BJ (cell line): ENCODE measurements at regions of chr1 and their contacts with region 1.

Region 1: DNA sequence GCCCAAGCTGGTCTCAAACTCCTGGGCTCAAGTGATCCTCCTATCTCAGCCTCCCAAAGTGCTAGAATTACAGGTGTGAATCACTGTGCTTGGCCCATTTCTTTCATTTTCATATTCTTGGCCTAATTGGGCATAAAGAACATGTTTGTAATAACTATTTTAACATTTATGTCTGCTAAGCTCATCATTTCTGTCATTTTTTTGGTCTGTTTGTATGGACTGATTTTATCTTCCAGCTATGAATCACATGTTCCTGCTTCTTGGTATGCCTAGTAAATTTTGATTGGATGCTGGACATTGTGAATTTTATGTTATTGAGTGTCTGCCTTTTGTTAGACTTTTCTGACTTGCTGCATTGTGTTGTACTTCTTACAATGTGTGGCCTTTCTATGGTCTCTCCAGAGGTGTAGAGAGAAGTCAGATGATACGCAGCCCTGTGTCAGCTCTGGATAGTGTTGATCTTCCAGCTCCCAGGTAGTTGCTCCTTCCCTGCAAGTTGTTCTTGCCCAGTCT is 39.0 kb upstream of the PPM1J start:
- DNase-seq: no peak
- H3K4me3 ChIP-seq: no peak overlapping the region
- H3K27me3 ChIP-seq: no peaks in the 10 kb centered on the region; the same call in 1 of the 2 replicates
- CTCF ChIP-seq: no peak

Region 2: GRCh38 chr1:111833334-111833733 is 920.8 kb before region 1 on chr1:
- CTCF ChIA-PET with region 1: no interaction called
- POLR2A ChIA-PET with region 1: no interaction called
- DNase-seq: no peak
- H3K4me3 ChIP-seq: no peak overlapping the region
- H3K27me3 ChIP-seq: no peaks in the 10 kb centered on the region
- CTCF ChIP-seq: no peak

Region 3: DNA sequence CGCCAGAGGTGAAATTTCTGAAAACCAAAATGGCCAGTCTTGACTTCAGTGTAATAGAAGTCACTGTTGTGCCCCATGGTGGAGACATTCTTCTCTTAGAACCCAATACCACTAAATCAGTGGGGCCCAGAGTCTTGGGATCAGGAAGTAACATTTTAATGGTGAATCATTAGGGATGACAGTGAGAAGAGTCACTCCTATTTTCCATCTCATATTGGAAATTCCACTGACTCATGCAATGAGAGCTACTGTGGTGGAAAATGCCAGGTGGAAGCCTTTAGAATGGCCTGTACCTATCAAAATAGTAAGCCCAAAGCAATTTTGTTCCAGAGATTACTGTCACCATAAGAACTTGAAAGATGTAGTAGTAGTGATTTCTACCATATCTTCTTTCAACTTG is 18.4 kb before region 1 on chr1:
- CTCF ChIA-PET with region 1: interaction called, 3 read pairs
- POLR2A ChIA-PET with region 1: interaction called, 12 read pairs
- DNase-seq: peak; percentile 43
- H3K4me3 ChIP-seq: no peak overlapping the region
- H3K27me3 ChIP-seq: no peaks in the 10 kb centered on the region
- CTCF ChIP-seq: no peak

Region 4: DNA sequence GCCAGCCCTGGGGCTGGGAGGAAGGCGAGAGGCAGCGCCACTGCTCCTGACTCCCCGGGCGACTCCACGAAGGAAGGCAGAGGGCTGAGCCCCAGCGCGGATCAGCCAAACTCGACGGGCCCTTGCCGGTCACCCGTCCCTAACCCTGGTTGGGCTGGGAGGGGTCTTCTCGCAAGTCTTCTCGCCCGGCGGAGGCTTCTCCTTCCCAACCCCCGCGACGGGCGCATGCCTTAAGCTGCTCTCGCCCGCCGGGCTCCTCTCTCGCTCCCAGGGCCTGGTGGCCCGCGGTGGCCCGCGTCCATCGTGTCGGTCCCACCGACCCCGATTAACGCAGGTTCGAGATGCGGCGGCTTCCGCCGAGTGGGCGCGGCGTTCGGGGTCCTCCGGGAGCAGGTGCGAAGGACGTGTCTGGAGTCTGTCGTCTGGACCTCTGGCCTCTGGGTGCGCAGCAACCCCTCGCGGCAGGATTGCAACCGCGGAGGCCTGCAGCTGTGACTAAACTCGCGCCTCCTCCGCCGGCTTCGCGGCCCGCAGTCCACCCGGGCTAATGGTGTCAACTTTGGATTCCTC is 10.1 kb before region 1 on chr1:
- CTCF ChIA-PET with region 1: interaction called, 21 read pairs
- POLR2A ChIA-PET with region 1: no interaction called
- DNase-seq: no peak
- H3K4me3 ChIP-seq: peak overlapping the region; percentile 22
- H3K27me3 ChIP-seq: peaks cover 7% of the 10 kb centered on the region
- CTCF ChIP-seq: peak; percentile 83